ENCODE measurements at regions of chr5 and their contacts with region 1.

Region 1: GRCh38 chr5:139273572-139274289 is 19.8 kb upstream of the MATR3 start:
- DNase-seq: peak; percentile 67 to 89 (median 76)
- H3K4me3 ChIP-seq: peak overlapping the region; percentile 43 to 89 (median 70)
- H3K27ac ChIP-seq: peak overlapping the region; percentile 27 to 97 (median 87)
- H3K27me3 ChIP-seq: no peaks in the 10 kb centered on the region
- CTCF ChIP-seq: peak in 34 of 56 donors; percentile 4 to 53 (median 30)

Region 2: GRCh38 chr5:138054847-138055558 is 1218.7 kb before region 1 on chr5:
- intact Hi-C with region 1: no loop called
- DNase-seq: peak in 9 of 10 donors; percentile 39 to 80 (median 60)
- H3K4me3 ChIP-seq: peak overlapping the region; percentile 34 to 75 (median 59)
- H3K27ac ChIP-seq: peak overlapping the region; percentile 66 to 96 (median 90)
- H3K27me3 ChIP-seq: no peaks in the 10 kb centered on the region
- CTCF ChIP-seq: peak in 1 of 56 donors; percentile 11

Region 3: GRCh38 chr5:139243425-139243970 is 30.2 kb before region 1 on chr5:
- intact Hi-C with region 1: no loop called
- DNase-seq: no peak
- H3K4me3 ChIP-seq: no peak overlapping the region
- H3K27ac ChIP-seq: no peak overlapping the region
- H3K27me3 ChIP-seq: no peaks in the 10 kb centered on the region
- CTCF ChIP-seq: no peak

Region 4: DNA sequence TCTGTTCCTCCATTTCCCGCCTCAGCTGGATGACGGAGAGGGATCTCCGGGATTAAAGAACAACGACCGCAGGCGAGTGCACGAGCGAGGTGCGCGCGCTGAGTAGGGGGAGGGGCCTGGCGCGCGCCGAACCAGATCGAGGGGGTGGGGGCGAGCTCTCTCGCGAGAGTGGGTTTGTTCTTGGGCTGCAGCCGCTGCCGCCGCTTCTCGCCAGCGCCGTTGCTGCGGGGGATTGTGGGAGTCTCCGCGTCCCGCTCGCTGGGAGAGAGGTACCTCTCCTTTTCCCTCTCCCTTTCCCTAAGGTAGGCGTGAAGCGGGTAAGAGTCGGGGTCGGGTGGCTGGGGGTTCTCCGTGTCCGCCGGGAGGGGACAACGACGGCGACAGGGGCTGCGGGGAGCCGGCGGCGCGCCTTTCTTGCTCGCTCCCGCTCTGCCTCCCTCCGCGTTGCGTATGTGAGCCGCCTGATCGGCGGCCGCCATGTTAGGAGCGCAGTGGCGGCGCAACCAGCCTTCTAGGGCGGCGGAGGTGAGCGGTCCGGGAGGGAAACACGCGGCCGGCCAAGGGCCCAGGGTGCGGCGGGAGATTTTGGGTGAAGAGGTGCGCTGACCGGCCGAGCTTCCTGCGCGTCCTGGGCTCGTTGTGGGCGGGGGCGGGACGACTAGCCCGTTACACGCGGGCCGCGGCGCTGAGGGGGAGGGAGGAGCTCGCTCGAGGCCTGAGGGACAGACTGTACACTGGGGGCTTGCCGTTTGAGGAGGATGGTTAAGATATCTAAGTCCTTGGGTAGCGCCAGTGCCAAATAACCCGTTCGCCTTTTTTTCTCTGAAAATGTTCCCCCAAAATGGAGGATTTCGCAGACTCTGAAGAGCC is 20.0 kb after region 1 on chr5 and contains the start of gene MATR3:
- intact Hi-C with region 1: loop called in 1 of 2 experiments (anchors 2 kb)
- DNase-seq: peak; percentile 82 to 95 (median 92)
- H3K4me3 ChIP-seq: peak within 1 kb of the TSS; percentile 59 to 98 (median 89)
- H3K27ac ChIP-seq: peak within 1 kb of the TSS; percentile 98 to 100 (median 100)
- H3K27me3 ChIP-seq: no peaks in the 10 kb centered on the region
- CTCF ChIP-seq: peak in 27 of 56 donors; percentile 2 to 46 (median 27)
- total RNA-seq, gene MATR3: 154 to 477 (median 345) TPM

Measured in dorsolateral prefrontal cortex (tissue), 120 donors.